Right ventricle myocardium inferior (tissue), 1 donor: ENCODE measurements at regions of chr5 and their contacts with region 1.

Region 1: DNA sequence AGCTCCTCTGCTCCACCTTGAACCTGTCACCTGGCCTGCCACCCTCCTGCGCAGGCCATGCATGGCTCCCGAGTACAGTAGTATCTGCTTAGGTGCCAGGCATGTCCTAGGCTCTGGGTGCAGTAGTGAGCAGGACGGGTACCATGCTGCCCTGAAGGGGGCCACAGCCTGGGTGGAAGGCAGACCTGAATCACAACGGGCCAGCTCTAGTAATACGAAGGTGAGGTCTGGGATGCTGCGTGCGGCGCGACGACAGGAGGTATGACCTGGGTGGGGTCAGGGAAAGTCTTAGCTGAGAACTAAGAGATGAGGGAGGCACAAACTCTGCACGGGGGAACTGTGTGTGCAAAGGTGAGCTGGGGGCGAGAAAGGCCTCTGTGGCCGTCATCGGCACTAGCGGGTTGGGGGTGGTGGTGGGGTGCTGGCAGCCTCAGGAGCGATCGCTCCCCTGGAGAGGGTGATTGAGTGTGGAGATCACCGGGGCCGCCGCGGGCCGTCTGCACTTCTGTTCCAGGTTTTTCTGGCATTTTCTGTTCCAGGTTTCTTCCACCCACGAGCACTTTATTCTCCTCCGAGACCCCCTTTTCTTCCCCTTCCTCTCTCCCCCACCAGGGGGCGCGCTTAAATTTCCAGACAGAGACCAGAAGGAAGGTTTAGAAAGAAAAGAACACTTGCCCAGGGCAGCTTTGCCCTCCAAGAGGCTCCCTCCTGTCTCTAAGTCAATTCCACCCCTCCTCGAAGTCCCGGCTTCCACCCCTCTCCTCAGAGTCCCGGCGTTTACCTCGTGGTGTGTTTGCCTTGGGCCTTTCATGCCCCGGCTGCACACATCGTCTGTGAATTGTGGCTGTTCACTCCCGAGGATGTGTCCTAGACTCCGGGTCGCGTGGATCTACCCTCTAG is 15.1 kb downstream of the PDLIM4 start:
- DNase-seq: peak; percentile 81
- ATAC-seq: no peak

Region 2: GRCh38 chr5:132238169-132238744 is 34.3 kb before region 1 on chr5:
- intact Hi-C with region 1: loop called (anchors 5 kb)
- DNase-seq: no peak
- ATAC-seq: peak; percentile 70

Region 3: DNA sequence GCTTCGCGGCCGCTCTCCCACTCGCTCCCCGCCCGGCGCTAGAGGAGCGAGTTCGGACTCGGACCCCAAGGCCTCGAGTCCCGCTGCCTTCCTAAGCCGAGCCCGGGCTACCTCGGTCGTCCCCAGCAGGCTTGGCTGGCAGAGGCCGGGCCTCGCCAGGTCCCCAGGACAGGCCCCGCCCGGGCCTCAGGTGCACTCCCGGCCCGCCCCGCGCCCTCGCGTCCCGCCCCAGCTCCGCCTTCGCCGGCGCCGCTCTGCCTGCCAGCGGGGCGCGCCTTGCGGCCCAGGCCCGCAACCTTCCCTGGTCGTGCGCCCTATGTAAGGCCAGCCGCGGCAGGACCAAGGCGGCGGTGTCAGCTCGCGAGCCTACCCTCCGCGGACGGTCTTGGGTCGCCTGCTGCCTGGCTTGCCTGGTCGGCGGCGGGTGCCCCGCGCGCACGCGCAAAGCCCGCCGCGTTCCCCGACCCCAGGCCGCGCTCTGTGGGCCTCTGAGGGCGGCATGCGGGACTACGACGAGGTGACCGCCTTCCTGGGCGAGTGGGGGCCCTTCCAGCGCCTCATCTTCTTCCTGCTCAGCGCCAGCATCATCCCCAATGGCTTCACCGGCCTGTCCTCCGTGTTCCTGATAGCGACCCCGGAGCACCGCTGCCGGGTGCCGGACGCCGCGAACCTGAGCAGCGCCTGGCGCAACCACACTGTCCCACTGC is 97.1 kb after region 1 on chr5 and contains the start of gene SLC22A5:
- intact Hi-C with region 1: loop called (anchors 5 kb)
- DNase-seq: peak; percentile 86
- ATAC-seq: peak; percentile 86
- total RNA-seq, gene SLC22A5: 22.3 TPM

Region 4: GRCh38 chr5:132386644-132387286 is 114.2 kb after region 1 on chr5:
- intact Hi-C with region 1: no loop called
- DNase-seq: peak; percentile 88
- ATAC-seq: peak; percentile 84

Region 5: DNA sequence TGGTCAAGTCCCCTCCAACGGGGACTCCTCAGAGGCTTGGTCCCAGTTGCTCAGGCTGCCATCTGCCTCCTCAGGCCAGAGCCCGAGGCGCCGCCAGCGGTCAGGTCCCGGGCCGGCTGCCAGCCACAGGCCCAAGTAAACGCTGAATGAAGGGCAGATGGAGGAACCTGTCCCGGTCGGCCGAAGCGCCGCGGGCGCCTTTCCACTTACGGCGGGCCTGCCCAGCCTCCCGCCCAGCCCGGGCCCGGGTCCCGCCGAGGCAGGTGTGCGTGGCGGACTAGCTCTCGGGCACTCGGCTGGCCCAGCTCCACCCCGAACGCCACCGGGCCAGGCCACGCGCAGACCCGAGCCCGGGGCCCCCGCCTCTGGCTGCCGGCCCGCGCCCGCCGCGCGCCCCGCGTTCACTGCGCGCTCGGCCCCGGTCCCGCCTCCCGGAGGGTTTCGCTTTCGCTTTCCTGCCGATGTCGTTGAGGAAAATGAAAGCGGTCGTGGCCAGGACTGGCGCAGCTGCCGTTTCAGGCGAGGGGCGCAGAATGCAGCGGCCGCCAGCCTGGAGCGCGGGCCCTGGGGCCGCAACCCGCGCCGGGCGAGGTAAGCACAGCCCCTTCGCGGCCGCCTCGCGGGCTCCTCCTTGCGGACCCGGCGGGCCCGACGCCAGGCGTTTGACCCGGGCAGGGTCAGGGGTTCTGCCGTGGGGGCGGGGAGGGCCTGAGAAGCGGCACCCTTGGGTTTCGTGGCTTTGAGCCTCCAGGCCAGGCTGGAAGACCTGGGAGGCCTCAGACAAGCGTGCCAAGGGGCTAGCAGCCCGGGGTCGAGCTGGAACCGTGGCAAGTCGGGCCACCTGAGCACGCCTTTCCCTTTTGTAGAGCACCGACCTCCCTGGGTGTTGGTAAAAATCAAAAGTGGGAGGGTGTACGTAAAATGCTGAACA is 138.2 kb after region 1 on chr5:
- intact Hi-C with region 1: no loop called
- DNase-seq: peak; percentile 92
- ATAC-seq: peak; percentile 79